Activated CD4-positive, alpha-beta memory T cell treated with anti-CD3 and anti-CD28 coated beads for 36 hours (primary cell): ENCODE measurements at regions of chr3 and their contacts with region 1.

Region 1: GRCh38 chr3:128969993-128970739 is 23.7 kb downstream of the CFAP92 start:
- DNase-seq: peak; percentile 72
- H3K4me3 Mint-ChIP-seq: no peak overlapping the region
- H3K27ac Mint-ChIP-seq: no peak overlapping the region
- H3K4me1 Mint-ChIP-seq: peaks cover 3% of the 10 kb centered on the region
- H3K27me3 Mint-ChIP-seq: no peaks in the 10 kb centered on the region

Region 2: GRCh38 chr3:128983293-128984069 is 13.3 kb after region 1 on chr3:
- CTCF ChIA-PET with region 1: interaction called, 21 read pairs
- POLR2A ChIA-PET with region 1: no interaction called
- intact Hi-C with region 1: no loop called
- DNase-seq: no peak
- H3K4me3 Mint-ChIP-seq: no peak overlapping the region
- H3K27ac Mint-ChIP-seq: no peak overlapping the region
- H3K4me1 Mint-ChIP-seq: no peaks in the 10 kb centered on the region
- H3K27me3 Mint-ChIP-seq: no peaks in the 10 kb centered on the region

Region 3: GRCh38 chr3:129026728-129027543 is 56.8 kb after region 1 on chr3:
- CTCF ChIA-PET with region 1: interaction called, 28 read pairs
- POLR2A ChIA-PET with region 1: no interaction called
- intact Hi-C with region 1: no loop called
- DNase-seq: peak; percentile 96
- H3K4me3 Mint-ChIP-seq: peak overlapping the region; percentile 73
- H3K27ac Mint-ChIP-seq: peak overlapping the region; percentile 83
- H3K4me1 Mint-ChIP-seq: peaks cover 9% of the 10 kb centered on the region
- H3K27me3 Mint-ChIP-seq: no peaks in the 10 kb centered on the region

Region 4: GRCh38 chr3:129120254-129121004 is 150.3 kb after region 1 on chr3:
- CTCF ChIA-PET with region 1: interaction called, 22 read pairs
- POLR2A ChIA-PET with region 1: no interaction called
- intact Hi-C with region 1: no loop called
- DNase-seq: peak; percentile 97
- H3K4me3 Mint-ChIP-seq: peak overlapping the region; percentile 92
- H3K27ac Mint-ChIP-seq: peak overlapping the region; percentile 98
- H3K4me1 Mint-ChIP-seq: peaks cover 43% of the 10 kb centered on the region
- H3K27me3 Mint-ChIP-seq: no peaks in the 10 kb centered on the region

Region 5: DNA sequence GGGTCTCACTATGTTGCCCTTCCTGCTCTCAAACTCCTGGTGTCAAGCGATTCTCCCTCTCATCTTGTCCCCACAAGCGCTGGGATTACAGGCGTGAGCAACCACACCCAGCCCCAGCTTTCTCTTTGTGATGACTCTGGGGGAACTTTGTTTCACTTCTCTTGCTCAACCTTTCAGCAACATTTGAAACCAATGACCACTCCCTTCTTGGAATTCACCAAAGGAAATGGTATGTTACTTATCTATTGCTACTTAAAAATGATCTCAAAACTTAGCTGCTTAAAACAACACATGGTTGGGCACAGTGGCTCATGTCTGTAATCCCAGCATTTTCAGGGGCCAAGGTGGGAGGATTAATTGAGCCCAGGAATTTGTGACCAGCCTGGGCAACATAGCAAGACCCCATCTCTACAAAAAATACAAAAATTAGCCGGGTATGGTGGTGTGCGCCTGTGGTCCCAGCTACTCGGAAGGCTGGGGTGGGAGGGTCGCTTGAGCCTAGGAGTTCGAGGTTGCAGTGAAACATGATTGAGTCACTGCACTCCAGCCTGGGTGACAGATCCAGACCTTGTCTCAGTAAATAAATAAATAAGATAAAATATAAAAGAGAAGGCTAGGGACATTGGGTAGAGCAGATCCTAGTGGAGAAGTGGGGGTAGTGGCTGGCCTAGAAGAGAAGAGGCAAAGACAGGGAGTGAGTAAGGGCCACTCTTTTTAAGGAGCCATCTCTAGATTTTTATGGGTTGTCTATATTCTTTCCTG is 269.0 kb after region 1 on chr3:
- CTCF ChIA-PET with region 1: interaction called, 111 read pairs
- POLR2A ChIA-PET with region 1: no interaction called
- intact Hi-C with region 1: no loop called
- DNase-seq: peak; percentile 64
- H3K4me3 Mint-ChIP-seq: peak overlapping the region; percentile 15
- H3K27ac Mint-ChIP-seq: peak overlapping the region; percentile 81
- H3K4me1 Mint-ChIP-seq: peaks cover 20% of the 10 kb centered on the region
- H3K27me3 Mint-ChIP-seq: no peaks in the 10 kb centered on the region

Region 6: GRCh38 chr3:129259612-129260452 is 289.7 kb after region 1 on chr3:
- CTCF ChIA-PET with region 1: no interaction called
- POLR2A ChIA-PET with region 1: no interaction called
- intact Hi-C with region 1: no loop called
- DNase-seq: no peak
- H3K4me3 Mint-ChIP-seq: no peak overlapping the region
- H3K27ac Mint-ChIP-seq: no peak overlapping the region
- H3K4me1 Mint-ChIP-seq: no peaks in the 10 kb centered on the region
- H3K27me3 Mint-ChIP-seq: no peaks in the 10 kb centered on the region

Region 7: GRCh38 chr3:129424185-129424841 is 454.1 kb after region 1 on chr3:
- CTCF ChIA-PET with region 1: no interaction called
- POLR2A ChIA-PET with region 1: no interaction called
- intact Hi-C with region 1: no loop called
- DNase-seq: peak; percentile 28
- H3K4me3 Mint-ChIP-seq: no peak overlapping the region
- H3K27ac Mint-ChIP-seq: no peak overlapping the region
- H3K4me1 Mint-ChIP-seq: peaks cover 36% of the 10 kb centered on the region
- H3K27me3 Mint-ChIP-seq: no peaks in the 10 kb centered on the region

Region 8: DNA sequence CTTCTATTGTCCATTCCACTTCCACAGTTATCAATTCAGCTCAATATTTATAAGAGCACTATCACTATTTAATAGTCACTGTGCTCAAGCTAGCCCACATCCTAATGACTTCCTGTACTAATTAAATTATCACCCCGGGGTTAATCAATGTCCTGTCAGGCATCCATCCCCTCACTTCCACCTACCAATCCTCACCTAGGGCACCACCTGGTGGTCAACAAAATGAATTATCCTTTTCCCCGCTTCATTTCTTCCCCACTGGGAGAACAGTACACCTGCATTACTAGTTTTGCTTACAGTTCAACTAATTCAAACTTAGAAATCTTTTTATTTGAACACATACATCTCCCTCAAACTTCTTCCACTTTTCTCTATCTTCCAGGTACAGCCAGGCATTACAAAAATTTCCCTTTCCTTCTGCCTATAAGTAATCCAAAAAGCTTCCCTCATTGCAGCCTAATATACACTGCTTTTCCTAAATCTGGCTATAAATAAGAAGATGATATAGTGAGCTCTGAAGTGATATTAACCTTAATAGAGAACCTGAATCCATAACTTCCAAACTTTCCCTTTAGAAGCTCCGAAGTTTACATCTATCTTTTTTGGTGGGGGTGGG is 854.9 kb after region 1 on chr3:
- CTCF ChIA-PET with region 1: no interaction called
- POLR2A ChIA-PET with region 1: no interaction called
- intact Hi-C with region 1: no loop called
- DNase-seq: peak; percentile 44
- H3K4me3 Mint-ChIP-seq: no peak overlapping the region
- H3K27ac Mint-ChIP-seq: no peak overlapping the region
- H3K4me1 Mint-ChIP-seq: peaks cover 15% of the 10 kb centered on the region
- H3K27me3 Mint-ChIP-seq: no peaks in the 10 kb centered on the region